ENCODE measurements at regions of chr6 and their contacts with region 1.

Region 1: DNA sequence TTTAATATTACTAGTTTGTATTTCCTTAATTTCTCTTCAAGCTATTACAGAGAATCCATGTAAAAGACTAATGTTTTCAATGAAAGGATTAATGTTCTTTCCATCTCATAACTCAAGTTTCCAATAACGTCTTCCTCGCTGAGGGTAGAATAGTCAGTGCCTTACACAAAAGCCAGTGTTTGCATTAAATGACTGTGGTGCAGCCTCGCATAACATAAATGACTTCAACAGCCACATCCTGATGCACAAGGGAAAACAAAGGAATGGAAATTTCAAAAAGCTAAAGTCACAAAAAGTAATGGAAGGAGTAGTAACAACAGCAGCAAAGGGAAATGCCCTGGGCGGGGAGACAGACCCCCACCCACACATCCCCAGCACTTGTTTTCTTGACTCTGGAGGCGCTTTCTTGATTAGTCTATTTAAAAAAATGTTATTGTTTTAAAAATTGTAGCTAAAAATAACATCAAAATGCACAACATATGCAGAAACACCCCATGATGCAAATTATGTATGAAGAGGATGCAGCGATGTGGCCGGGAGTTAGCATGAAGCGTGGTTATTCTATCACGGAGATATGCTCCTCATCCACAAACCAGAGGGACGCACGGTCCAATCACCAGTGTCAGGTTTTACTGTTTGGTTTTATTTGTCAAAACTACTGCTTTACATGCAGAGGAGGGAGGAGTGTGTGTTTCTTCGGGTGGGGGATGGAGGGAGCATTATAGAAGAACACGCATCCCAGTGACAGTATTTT is 228.6 kb downstream of the GMPR start:
- DNase-seq: no peak
- CTCF ChIP-seq: no peak

Region 2: DNA sequence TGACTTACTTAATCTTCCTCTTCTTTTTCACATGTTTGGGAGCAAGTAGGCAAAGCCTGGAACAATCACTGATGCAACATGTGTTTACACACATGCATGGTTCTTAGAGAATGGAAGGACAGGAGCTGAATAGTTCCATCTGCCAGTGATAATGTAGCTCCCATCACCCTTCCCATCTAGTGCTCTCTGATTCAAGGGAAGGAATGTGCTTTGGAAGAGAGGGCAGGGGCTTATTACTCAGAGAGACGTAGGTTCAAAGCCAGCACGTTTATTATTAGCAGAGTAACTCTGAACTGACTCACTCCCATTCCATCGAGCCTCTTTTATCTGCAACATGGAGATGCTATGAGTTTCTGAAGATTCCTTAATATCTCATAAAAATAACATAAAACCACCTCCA is 16.7 kb before region 1 on chr6:
- CTCF ChIA-PET with region 1: interaction called, 10 read pairs
- POLR2A ChIA-PET with region 1: no interaction called
- DNase-seq: no peak
- CTCF ChIP-seq: no peak

Measured in GM10248 (cell line).